Activated T-helper 1 cell treated with anti-CD3 and anti-CD28 coated beads, Interleukin-12 subunit alpha, Interleukin-12 subunit beta, Interleukin-2, Interleukin-4 antibody, amounts not matched to agents 30 ng/mL and 10 ng/mL and 1 ng/mL, durations not matched to agents 14 hours and 24 hours and 36 hours (primary cell): ENCODE measurements at regions of chr11 and their contacts with region 1.

Region 1: DNA sequence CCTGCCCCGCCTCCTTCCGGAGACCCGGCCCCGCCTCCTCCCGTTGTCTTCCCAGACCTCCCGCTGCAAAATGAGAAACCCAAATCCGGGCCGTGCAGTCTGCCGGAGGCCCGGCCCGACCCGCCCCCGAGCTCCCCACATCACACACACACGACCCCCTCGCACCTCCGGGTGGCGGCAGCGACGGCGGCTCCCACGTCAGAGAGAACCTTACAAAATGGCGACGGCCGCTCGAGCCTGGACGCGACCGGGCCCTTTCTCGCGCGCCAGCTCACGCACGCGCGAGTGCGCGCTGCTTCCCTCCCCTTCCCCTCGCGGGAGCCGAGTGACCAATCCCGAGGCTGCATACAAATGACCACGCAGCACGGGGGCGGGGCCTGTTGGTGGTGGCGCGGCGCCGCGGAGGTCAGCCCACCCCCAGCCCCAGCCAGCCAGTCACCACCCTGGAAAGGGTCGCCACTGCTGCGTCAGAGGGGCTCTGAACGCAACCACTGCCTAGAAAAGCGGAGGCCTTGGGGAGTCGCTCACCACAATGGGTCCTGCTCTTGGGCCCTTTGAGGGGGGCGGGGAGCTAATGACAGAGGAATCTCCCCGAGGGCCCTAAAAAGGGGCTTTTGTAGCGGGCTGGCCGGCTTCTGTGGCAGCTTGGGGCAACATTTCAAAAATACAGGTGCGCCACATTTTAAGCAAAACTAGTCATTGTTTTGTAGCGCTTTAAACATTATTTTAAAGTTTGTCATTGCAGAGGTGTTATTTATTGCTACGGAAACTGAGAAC is at the start of gene RBM4B:
- DNase-seq: peak; percentile 94
- H3K4me3 Mint-ChIP-seq: peak within 1 kb of the TSS; percentile 95
- H3K27ac Mint-ChIP-seq: peak within 1 kb of the TSS; percentile 97
- H3K4me1 Mint-ChIP-seq: peaks cover 35% of the 10 kb centered on the region
- H3K27me3 Mint-ChIP-seq: no peaks in the 10 kb centered on the region
- total RNA-seq, gene RBM4B: 14.3 and 16.6 TPM in 2 replicates

Region 2: GRCh38 chr11:66311965-66312548 is 365.7 kb before region 1 on chr11:
- intact Hi-C with region 1: loop called (anchors 2 kb)
- DNase-seq: peak; percentile 93
- H3K4me3 Mint-ChIP-seq: peak overlapping the region; percentile 95
- H3K27ac Mint-ChIP-seq: peak overlapping the region; percentile 94
- H3K4me1 Mint-ChIP-seq: peaks cover 14% of the 10 kb centered on the region
- H3K27me3 Mint-ChIP-seq: peaks cover 3% of the 10 kb centered on the region

Region 3: GRCh38 chr11:66429983-66430602 is 247.7 kb before region 1 on chr11:
- intact Hi-C with region 1: loop called (anchors 1 kb)
- DNase-seq: peak; percentile 49
- H3K4me3 Mint-ChIP-seq: no peak overlapping the region
- H3K27ac Mint-ChIP-seq: no peak overlapping the region
- H3K4me1 Mint-ChIP-seq: peaks cover 7% of the 10 kb centered on the region
- H3K27me3 Mint-ChIP-seq: no peaks in the 10 kb centered on the region

Region 4: DNA sequence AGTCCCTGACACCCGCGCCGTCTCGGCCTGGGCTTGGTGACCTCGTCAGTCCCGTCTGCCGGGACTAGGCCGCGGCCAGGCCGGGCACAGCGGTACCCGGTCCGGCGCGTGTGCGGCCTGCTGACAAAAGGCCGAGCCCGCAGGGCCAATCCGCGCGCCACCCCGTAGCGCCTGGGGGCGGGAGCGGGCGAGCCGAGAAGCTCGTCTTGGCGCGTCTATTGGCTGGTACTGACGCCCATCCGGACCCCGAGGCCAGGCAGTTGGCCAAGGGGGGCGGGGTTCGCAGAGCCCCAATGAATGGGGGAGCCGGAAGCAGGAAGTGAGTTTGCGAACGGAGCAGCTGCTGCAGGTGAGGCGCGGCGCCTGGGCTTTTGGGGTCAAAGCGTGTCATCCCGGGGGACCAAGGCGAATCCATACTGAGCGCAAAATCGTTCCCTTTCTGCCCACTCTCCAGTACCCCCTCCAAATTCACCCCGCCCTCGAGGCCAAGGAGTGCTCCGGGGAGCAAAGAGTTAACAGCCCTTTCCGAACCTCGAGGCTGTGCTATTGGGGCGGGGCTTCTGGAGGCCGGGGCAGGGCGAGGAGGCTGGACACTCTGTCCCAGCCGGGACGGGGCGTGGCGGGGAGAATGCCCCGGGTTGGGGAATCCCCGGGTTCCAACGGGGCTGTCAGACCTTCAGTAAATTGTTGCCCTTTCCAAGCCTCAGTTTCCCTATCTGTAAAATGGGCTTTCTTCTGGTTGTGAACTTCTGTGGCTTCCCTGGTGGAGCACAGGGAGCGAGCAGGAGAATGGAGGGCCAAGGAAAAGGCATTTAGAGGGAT is 197.5 kb before region 1 on chr11 and contains the start of gene DPP3:
- intact Hi-C with region 1: loop called (anchors 1 kb)
- DNase-seq: peak; percentile 96
- H3K4me3 Mint-ChIP-seq: peak within 1 kb of the TSS; percentile 89
- H3K27ac Mint-ChIP-seq: peak within 1 kb of the TSS; percentile 82
- H3K4me1 Mint-ChIP-seq: peaks cover 44% of the 10 kb centered on the region
- H3K27me3 Mint-ChIP-seq: no peaks in the 10 kb centered on the region
- total RNA-seq, gene DPP3: 102 and 112 TPM in 2 replicates

Region 5: DNA sequence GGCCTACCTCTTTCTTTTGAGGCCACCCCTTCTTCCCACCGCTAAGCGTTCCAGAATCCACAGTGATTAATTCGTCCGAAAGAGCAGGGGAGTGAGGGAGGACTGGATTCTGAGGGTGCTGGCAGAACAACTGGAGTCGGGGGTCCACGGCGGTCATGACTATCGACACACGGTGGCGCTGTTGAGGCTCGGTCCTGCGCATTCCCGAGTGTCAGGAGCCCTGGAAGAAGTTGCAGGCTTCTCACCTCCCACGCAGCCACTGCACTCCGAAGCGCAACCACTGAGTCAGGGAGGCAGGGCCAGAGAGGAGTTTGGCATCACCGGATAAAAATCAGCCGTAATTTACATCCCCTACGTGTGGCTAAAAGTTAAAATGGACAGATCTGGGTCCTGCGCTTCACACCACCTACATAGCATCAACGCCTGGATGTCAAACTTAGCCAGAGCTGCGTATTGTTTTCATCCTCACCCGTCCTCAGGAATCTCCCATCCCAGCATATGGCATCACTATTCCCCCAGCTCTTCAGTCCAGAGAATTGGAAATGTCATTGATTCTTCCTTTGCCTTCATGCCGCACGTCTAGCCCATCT is 98.7 kb before region 1 on chr11:
- intact Hi-C with region 1: loop called (anchors 1 kb)
- DNase-seq: peak; percentile 53
- H3K4me3 Mint-ChIP-seq: no peak overlapping the region
- H3K27ac Mint-ChIP-seq: peak overlapping the region; percentile 9
- H3K4me1 Mint-ChIP-seq: peaks cover 14% of the 10 kb centered on the region
- H3K27me3 Mint-ChIP-seq: peaks cover 15% of the 10 kb centered on the region

Region 6: DNA sequence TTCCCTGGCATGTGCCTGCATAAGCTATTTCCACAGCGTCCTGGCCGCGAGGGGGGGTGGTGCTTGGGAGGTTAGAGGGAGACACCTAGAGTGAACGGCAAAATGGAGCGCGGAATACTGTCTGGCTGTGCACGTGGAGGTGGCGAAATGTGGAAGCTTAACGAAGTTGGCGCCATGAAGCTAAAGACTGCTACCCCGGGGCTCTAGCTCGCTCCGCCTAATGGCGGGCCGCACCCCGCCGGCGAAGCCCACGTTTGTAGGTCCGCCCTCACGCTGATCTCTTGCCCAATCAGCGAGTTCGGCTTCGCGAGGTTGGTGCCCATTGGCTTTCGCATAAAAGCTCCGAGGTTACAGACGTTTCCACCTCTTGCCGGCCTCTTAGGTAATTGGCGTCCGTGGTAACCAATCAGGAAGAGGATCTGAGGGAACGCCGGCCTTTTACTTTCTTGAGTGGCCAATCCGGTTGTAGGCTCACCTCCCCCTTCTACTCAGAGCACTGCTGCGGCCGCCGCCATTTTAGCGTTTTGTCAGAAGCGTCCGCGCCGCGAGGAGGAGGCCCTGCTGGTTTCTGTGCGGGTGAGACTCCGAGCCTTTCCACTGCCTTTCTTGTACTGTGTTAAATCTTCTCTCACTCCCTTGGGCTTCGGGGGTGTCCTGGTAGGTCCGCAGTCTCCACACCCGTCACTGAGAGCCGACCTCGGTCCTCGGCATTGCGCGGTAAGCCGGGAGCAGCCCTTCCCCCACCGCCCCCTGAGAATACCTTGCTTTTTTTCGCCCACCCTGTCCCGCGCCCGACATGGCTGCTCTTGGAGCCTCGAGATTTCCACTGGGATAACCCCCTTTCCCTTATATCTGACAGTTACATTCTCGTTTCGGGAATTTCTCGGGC is 39.4 kb before region 1 on chr11 and contains the start of gene RBM4:
- intact Hi-C with region 1: loop called (anchors 1 kb)
- DNase-seq: peak; percentile 97
- H3K4me3 Mint-ChIP-seq: peak within 1 kb of the TSS; percentile 96
- H3K27ac Mint-ChIP-seq: peak within 1 kb of the TSS; percentile 96
- H3K4me1 Mint-ChIP-seq: peaks cover 68% of the 10 kb centered on the region
- H3K27me3 Mint-ChIP-seq: no peaks in the 10 kb centered on the region
- total RNA-seq, gene RBM4: 131 and 133 TPM in 2 replicates

Region 7: DNA sequence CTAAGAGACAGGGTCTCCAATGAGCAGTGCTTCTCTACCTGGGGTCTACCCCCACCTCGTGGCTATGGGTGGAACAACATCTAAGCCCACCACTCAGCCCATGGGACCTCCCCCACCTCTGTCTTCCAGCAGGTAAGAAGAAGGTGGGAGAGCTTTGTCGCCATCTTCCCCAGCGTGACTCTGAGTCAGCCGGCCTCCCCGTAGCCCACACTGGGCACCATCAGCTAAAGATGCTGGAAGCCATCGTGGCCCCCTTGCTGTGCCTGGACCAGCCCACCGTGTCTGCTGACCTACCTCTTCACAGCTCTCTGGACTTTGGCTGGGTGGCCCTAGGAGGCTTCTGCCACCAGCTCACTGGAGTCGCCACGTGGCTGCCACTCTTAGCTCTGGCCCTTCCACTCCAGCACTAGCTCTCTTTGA is 298.3 kb after region 1 on chr11:
- intact Hi-C with region 1: no loop called
- DNase-seq: no peak
- H3K4me3 Mint-ChIP-seq: no peak overlapping the region
- H3K27ac Mint-ChIP-seq: no peak overlapping the region
- H3K4me1 Mint-ChIP-seq: peaks cover 1% of the 10 kb centered on the region
- H3K27me3 Mint-ChIP-seq: peaks cover 1% of the 10 kb centered on the region